ENCODE measurements at regions of chr10 and their contacts with region 1.

Region 1: GRCh38 chr10:110304780-110305421 is at the start of gene SMNDC1:
- DNase-seq: peak; percentile 98
- ATAC-seq: peak; percentile 96 to 97
- total RNA-seq, gene SMNDC1: 21.6 to 24.4 TPM

Region 2: GRCh38 chr10:109838592-109839244 is 466.2 kb before region 1 on chr10:
- intact Hi-C with region 1: no loop called
- DNase-seq: no peak
- ATAC-seq: no peak

Region 3: DNA sequence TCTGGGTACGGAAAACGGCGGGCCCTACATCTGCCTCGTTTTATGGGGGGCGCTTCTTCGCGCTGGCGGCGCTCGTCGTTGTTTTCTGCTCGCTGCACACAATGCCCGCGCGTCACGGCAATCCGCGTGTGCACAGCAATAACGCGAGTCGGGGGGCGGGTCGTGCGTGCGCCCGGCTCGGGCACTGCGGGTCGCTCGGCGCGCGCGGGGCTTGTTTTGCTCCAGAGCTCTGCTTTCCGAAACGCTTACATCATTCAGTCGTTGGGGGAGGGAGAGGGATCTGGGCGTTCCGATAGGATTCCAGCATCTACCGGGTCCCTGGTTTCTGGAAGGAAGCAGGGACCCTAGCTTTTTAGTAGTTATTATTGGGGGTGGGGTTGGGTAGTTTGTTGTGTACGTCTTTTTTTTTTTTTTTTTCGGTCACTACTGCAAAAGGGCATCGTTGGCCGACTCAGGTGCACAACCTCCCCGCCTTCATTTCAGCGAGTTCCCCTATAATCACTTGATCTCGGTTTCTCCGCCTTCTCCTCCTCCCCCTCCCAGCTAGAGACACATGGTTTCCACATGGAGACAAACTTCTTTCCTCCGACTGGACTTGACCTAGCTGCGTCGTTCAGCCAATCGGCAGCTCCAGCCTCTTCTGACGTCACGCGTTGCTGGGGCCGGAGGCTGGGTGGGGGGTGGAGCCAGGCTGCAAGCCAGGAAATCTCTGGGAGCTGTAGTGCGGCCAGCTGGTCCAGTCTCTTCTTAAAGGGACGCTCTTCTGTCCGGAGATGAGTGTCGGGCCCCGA is 94.0 kb before region 1 on chr10:
- intact Hi-C with region 1: no loop called
- DNase-seq: peak; percentile 96
- ATAC-seq: peak; percentile 91

Region 4: DNA sequence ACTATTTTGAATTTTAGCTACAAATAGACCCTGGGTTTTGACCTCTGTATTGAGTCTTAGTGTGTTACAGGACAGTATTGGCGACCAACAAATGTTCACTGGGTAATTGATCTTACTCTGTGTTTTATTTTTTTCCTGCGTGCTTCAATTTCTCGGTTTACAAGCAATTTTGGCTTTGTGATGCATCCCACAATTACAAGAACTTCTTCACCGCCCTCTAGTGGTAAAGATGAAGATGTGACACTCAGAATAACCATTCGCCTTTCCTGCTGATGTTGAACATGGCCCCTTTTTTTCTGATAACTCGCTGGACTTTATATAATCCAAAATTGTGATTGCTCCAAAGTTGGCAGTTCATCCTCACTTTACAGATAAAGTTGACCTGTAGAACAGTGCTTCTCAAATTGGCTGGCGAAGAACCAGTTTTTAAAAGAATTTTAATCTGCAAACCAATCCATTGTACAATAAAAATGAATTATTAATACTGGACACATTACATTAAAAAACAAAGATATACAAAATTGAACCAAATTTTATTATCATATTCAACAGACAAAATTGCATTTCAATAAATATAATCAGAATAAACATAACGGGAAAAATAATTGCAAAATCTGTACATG is 242.3 kb after region 1 on chr10:
- intact Hi-C with region 1: loop called in 1 of 2 experiments (anchors 5 kb)
- DNase-seq: no peak
- ATAC-seq: peak; percentile 57 to 72

Region 5: DNA sequence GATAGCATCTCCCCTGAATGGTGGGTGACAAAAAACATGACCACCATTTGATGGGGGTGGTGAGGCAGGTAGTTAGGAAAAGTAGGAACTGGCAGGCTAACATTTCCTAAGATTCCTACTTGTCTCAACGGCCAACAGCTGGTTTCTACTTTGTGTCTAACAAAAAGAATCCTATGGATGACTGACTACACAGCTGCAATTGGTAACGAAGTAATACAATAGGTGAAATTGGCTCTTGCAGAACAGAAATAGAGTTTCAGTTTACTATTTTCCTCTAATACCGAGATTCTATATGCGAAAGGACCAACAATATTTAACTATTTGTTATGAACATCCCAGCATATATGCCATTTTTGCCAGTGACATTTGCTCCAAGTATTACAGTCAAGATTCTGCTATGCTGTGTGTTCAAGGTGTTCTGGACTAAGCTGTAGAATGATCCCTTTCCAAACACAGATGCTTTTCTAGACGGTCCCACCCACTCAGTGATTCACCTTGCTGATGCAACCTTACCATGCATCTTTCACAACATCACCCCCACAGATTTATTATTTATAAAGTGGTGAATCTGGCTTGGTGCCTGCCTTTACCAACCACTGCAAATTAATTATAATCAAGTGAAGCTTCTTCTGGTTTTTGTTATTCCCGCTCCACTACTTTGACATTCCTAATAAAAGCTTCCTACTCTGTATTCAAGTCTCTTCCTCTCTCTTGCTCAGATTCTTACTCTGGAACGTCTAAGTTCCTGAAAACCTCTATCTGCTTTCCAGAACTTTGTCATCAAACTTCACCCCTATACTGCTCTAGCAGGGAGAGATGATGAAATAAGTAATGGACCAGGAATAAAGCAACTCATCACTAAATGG is 597.3 kb after region 1 on chr10:
- intact Hi-C with region 1: loop called in 1 of 2 experiments (anchors 5 kb)
- DNase-seq: no peak
- ATAC-seq: peak in 1 of 2 donors; percentile 86

Measured in left cardiac atrium (tissue), 4 donors.